Calu3 (cell line): ENCODE measurements at regions of chrX and their contacts with region 1.

Region 1: DNA sequence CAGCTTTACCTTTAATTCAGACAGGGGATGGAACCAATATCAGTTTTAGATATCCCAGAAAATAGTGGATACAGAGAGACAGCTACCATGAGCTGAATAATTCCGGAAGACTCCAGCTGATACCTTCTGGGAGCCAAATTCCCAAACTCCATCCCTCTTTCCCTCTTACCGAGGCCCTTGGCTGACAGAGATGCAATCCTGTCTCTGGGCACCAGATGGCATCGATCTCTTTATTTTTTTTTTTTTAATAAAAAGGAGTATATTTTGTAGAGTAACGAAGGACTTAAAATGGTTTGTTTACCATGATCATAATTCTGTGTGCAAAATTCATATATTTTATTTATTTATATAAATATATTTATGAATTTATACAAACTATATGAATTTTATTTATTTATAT is 31.0 kb downstream of the RAB40A start:
- DNase-seq: no peak
- H3K4me3 Mint-ChIP-seq: no peak overlapping the region
- H3K27ac Mint-ChIP-seq: no peak overlapping the region
- H3K4me1 Mint-ChIP-seq: no peaks in the 10 kb centered on the region
- H3K27me3 Mint-ChIP-seq: no peaks in the 10 kb centered on the region
- CTCF ChIP-seq: no peak

Region 2: DNA sequence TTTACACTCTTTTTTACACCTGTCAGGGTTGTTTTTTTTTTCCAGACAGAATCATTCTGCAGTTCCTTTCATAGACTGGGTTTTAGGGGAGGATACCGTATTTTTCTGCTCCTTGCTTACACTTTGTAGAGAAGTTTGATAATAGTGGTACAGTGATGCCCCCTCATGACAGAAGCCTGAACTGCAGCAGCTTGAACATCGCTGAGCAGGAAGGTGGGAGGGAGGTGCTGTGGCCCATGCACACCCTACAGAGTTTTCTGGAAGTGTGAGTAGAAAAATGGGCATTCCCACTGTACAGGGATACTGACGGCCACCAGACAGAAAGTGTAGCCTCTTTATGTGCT is 23.6 kb before region 1 on chrX:
- CTCF ChIA-PET with region 1: no interaction called
- intact Hi-C with region 1: no loop called
- DNase-seq: peak; percentile 78
- H3K4me3 Mint-ChIP-seq: no peak overlapping the region
- H3K27ac Mint-ChIP-seq: no peak overlapping the region
- H3K4me1 Mint-ChIP-seq: peaks cover 18% of the 10 kb centered on the region
- H3K27me3 Mint-ChIP-seq: no peaks in the 10 kb centered on the region
- CTCF ChIP-seq: peak; percentile 75

Region 3: DNA sequence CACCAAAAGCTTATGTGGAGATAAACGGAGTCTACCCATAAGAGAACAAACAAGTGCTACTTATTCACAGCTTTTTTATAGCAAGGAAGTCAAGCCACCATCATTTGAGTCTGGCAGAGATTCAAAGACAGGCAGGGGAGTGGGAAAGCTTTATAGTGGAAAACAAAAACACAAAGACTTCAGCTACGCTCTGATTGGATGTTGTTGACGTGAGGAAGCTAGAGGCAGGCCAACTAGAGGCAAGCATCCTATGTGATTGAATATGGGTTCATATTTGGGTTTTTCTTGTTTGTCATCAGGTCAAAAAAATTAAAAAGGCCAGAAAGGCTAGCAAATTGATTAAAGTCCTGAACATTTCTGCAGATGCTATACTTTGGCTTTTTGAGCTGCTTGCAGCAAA is 96.3 kb after region 1 on chrX:
- CTCF ChIA-PET with region 1: no interaction called
- intact Hi-C with region 1: no loop called
- DNase-seq: no peak
- H3K4me3 Mint-ChIP-seq: peak overlapping the region; percentile 87
- H3K27ac Mint-ChIP-seq: peak overlapping the region; percentile 42
- H3K4me1 Mint-ChIP-seq: peaks cover 12% of the 10 kb centered on the region
- H3K27me3 Mint-ChIP-seq: no peaks in the 10 kb centered on the region
- CTCF ChIP-seq: no peak

Region 4: GRCh38 chrX:103817502-103817901 is 329.2 kb after region 1 on chrX:
- CTCF ChIA-PET with region 1: no interaction called
- intact Hi-C with region 1: loop called (anchors 2 kb)
- DNase-seq: peak; percentile 43
- H3K4me3 Mint-ChIP-seq: no peak overlapping the region
- H3K27ac Mint-ChIP-seq: no peak overlapping the region
- H3K4me1 Mint-ChIP-seq: no peaks in the 10 kb centered on the region
- H3K27me3 Mint-ChIP-seq: peaks cover 37% of the 10 kb centered on the region
- CTCF ChIP-seq: peak; percentile 32